Heart right ventricle (tissue), 16 donors: ENCODE measurements at regions of chr1 and their contacts with region 1.

Region 1: DNA sequence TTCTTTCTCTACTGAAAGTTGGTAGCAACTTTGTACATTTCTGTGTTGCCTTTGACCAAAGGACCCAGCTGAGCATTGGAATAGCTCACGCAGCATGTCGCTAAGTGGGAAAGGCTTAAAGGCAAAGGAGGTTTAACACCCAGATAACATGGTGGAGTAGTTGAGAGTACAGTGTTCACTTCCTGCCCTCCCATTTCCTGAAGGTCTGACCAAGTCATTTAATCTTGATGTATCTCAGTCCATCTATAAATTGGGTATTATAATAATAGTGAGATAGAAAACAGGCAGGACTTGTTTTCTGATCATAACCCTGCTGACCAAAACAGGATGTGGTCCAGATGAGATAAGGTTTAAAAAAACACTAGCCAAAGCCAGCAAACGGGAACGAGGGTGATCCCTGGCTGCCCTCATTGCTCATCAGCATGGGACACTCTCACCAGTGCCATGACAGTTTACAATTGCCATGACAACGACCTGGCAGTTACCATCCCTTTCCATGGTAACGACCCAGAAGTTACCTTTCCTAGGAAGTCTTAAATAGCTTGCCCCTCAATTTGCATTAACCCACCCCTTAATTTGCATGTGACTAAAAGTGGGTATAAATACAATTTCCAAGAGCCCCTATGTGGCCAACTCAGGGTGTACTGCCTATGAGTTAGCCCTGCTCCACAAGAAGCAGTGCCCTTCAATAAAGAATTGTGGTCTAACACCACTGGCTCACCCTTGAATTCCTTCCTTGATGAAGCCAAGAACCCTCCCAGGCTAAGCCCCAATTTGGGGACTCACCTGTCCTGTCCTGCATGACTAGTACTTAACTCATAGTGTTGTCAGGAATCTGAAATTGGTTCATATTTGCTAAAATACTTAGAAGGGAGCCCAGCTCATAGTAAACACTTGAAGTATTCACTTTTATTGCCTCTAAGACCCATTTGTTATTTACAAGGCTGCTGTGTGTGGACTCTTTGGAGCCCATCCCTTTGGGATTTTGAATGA is 28.4 kb upstream of the FHAD1 start:
- DNase-seq: peak in 1 of 2 donors; percentile 34
- ATAC-seq: peak in 4 of 8 donors; percentile 49 to 66 (median 58)
- H3K4me3 ChIP-seq: no peak overlapping the region
- H3K27ac ChIP-seq: peak overlapping the region in 1 of 10 donors; percentile 30
- H3K4me1 ChIP-seq: peaks cover 0 to 34% (median 13%) of the 10 kb centered on the region in 9 donors
- H3K27me3 ChIP-seq: no peaks in the 10 kb centered on the region
- CTCF ChIP-seq: no peak

Region 2: DNA sequence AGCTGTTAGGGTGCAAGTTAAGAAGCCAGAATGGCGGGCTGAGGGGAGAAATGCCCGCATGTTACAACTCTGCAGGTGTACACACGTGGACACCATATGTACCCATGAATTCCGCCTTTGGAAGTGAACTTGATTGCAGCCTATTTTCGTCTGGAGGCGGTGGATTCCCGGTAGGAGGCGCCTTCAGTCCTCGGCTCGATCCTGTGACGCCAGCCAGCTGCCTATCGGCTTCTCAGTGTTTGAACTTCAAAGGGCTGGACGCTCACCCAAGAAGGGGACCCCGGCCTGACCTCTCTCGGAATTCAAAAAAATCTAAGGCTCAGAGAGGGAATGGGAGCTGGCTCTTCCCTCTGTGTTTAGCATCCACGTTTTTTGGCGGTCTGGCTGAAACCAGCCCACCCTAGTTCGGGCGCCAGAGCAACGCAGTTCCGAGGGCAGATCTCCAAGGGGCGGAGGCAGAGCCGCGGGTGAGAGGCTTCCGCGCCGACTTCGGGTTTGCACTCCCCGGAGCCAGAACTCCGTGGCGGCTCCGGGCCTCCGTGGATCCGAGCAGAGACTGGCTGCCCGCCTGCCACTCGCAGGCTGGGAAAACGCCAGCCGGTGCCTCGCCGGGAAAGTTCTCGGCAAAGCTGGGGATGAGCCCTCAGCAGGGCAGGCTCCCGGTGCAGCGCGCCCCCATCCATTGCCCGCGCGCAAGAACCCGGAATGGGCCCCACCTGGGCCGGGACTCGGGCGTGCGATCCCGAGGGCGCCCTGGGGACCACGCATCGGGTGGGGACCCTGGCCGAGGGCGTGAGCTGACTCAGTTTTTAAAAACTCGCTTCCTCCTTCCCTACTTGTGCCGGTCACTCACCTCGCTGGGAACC is 66.0 kb before region 1 on chr1:
- intact Hi-C with region 1: loop called in 3 of 10 experiments (anchors 5 to 10 kb)
- DNase-seq: peak; percentile 76 to 83
- ATAC-seq: peak; percentile 56 to 84 (median 76)
- H3K4me3 ChIP-seq: peak overlapping the region; percentile 61 to 91 (median 66)
- H3K27ac ChIP-seq: peak overlapping the region; percentile 50 to 88 (median 80)
- H3K4me1 ChIP-seq: peaks cover 2 to 50% (median 20%) of the 10 kb centered on the region in 9 donors
- H3K27me3 ChIP-seq: peaks cover 0 to 35% (median 0%) of the 10 kb centered on the region in 7 donors
- CTCF ChIP-seq: peak; percentile 46 to 84 (median 66)